HepG2 (cell line): ENCODE measurements at regions of chr11 and their contacts with region 1.

Region 1: DNA sequence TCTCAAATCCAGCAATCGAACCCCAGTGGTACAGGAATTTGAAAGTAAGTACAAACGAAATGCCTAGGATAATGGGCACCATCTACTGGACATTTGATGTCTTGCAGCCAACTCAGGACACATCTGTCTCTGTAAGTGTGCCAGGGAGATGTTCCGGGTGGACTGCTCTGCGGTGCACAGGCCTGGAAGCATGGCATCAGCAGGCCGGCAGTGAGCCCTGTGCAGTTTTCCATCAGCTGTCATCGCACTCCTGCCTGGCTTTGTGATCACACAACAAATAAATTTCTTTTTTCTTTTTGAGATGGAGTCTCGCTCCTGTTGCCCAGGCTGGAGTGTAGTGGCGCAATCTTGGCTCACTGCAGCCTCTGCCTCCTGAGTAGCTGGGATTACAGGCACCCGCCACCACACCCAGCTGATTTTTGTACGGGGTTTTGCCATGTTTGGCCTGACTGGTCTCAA is 71.0 kb downstream of the JAM3 start:
- DNase-seq: peak; percentile 58
- ATAC-seq: peak; percentile 93
- H3K4me3 ChIP-seq: no peak overlapping the region; a peak in 1 of 6 replicates
- H3K27ac ChIP-seq: no peak overlapping the region
- H3K4me1 ChIP-seq: no peaks in the 10 kb centered on the region
- H3K27me3 ChIP-seq: no peaks in the 10 kb centered on the region
- CTCF ChIP-seq: peak; percentile 82
- EP300 ChIP-seq: no peak
- POLR2A ChIP-seq: no peak
- RAD21 ChIP-seq: peak; percentile 39; the same call in 1 of the 2 replicates

Region 2: DNA sequence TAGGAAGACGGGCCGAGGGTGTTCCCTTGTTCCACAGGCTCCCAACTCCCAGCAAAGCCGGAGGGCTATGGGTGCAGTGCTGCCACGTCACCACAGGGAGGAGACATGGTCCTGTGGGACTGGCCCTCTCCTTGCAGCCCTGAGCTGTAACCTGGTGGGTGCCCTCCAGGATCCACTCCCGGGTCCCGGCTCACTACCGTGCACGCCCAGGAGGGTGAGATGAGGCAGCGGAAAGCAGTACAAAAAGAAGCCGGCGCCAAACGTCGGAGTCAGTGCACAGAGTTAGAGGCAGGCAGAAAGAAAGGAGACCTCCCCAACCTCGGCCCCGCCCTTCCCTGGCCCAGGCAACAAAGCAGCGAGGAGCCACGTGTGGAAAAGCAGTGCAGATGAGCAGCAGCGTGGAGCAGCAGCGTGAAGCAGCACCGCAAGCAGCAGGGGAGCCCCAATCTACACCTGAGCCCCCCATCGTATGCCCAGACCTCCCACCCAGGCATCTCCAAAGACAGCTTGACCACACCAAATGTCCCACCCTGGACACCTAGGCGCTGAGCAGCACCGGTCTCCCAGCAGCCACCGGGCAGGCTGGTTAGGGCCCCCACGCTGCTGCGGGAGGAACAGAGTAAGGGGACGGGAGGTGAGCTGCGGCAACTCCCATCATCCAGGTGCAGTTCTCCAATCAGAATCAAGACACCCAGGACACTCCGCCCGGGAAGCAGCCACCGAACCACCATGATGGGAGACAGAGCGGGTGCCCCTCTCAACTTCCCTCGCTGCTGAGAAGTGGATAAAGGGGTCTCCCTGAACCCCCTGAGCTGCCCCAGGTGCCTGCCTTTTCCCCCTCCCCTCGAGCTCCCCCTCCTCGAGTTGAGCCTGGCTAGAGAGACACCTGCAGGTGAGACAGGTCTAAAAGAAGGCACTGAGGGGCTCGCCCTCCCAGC is 211.9 kb before region 1 on chr11:
- CTCF ChIA-PET with region 1: interaction called, 8 read pairs
- POLR2A ChIA-PET with region 1: no interaction called
- in situ Hi-C with region 1: loop called (anchors 5 kb)
- intact Hi-C with region 1: loop called (anchors 1 kb)
- DNase-seq: peak; percentile 36
- ATAC-seq: peak; percentile 91
- H3K4me3 ChIP-seq: no peak overlapping the region
- H3K27ac ChIP-seq: no peak overlapping the region
- H3K4me1 ChIP-seq: no peaks in the 10 kb centered on the region
- H3K27me3 ChIP-seq: peaks cover 11 to 76% of the 10 kb centered on the region in 2 experiments; a peak in 4 of 5 replicates
- CTCF ChIP-seq: peak; percentile 89
- EP300 ChIP-seq: no peak
- POLR2A ChIP-seq: no peak
- RAD21 ChIP-seq: peak; percentile 71

Region 3: GRCh38 chr11:134050541-134051383 is 89.1 kb before region 1 on chr11:
- CTCF ChIA-PET with region 1: interaction called, 22 read pairs
- POLR2A ChIA-PET with region 1: no interaction called
- in situ Hi-C with region 1: loop called (anchors 5 kb)
- intact Hi-C with region 1: loop called (anchors 1 kb)
- DNase-seq: peak; percentile 32
- ATAC-seq: peak; percentile 92
- H3K4me3 ChIP-seq: peak overlapping the region in 1 of 3 experiments; percentile 28; a peak in 1 of 6 replicates
- H3K27ac ChIP-seq: no peak overlapping the region
- H3K4me1 ChIP-seq: no peaks in the 10 kb centered on the region
- H3K27me3 ChIP-seq: peaks cover 9 to 49% of the 10 kb centered on the region in 2 experiments; a peak in 4 of 5 replicates
- CTCF ChIP-seq: peak; percentile 92
- EP300 ChIP-seq: no peak
- POLR2A ChIP-seq: no peak
- RAD21 ChIP-seq: peak; percentile 82

Region 4: DNA sequence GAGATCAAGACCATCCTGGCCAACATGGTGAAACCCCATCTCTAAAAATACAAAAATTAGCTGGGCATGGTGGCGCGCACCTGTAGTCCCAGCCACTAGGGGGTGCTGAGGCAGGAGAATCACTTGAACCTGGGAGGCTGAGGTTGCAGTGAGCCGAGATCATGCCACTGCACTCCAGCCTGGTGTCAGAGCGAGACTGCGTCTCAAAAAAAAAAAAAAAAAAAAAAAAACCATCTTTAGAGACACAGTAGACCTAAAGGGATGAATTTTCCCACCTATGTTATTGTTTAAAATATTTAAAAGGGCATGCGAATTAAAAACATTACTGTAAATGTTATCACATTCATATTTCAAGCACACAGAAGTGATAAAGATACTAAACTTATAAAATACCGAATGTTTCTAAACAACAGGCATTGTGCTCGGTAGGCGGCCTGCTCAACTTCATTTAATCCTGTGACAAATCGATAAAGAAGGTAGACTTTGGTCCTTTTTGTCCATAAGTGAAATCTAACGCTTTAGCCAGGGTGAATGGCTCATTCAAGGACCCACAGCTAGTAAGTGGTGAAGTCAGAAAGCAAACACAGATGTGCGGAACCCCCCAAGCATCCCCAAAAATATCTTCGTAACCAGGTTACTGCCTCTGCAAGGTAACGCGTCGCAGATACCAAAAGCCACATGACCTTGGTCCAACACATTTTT is 67.8 kb after region 1 on chr11:
- CTCF ChIA-PET with region 1: no interaction called
- POLR2A ChIA-PET with region 1: no interaction called
- in situ Hi-C with region 1: no loop called
- intact Hi-C with region 1: no loop called
- DNase-seq: peak; percentile 9
- ATAC-seq: peak; percentile 51
- H3K4me3 ChIP-seq: no peak overlapping the region
- H3K27ac ChIP-seq: no peak overlapping the region
- H3K4me1 ChIP-seq: peaks cover under 1% of the 10 kb centered on the region; the same call in 1 of the 2 replicates
- H3K27me3 ChIP-seq: no peaks in the 10 kb centered on the region
- CTCF ChIP-seq: peak; percentile 77
- EP300 ChIP-seq: no peak
- POLR2A ChIP-seq: no peak
- RAD21 ChIP-seq: peak; percentile 43; the same call in 1 of the 2 replicates